ENCODE measurements at regions of chr4 and their contacts with region 1.

Region 1: GRCh38 chr4:139476363-139476762 is 22.4 kb downstream of the RAB33B start:
- DNase-seq: no peak
- H3K4me3 ChIP-seq: no peak overlapping the region
- H3K4me3 Mint-ChIP-seq: no peak overlapping the region
- H3K27ac ChIP-seq: no peak overlapping the region
- H3K27ac Mint-ChIP-seq: peak overlapping the region in 2 of 7 donors; percentile 7 to 24
- H3K4me1 ChIP-seq: no peaks in the 10 kb centered on the region
- H3K4me1 Mint-ChIP-seq: peaks cover 0 to 6% (median 2%) of the 10 kb centered on the region in 4 donors
- H3K27me3 ChIP-seq: no peaks in the 10 kb centered on the region
- H3K27me3 Mint-ChIP-seq: no peaks in the 10 kb centered on the region

Region 2: DNA sequence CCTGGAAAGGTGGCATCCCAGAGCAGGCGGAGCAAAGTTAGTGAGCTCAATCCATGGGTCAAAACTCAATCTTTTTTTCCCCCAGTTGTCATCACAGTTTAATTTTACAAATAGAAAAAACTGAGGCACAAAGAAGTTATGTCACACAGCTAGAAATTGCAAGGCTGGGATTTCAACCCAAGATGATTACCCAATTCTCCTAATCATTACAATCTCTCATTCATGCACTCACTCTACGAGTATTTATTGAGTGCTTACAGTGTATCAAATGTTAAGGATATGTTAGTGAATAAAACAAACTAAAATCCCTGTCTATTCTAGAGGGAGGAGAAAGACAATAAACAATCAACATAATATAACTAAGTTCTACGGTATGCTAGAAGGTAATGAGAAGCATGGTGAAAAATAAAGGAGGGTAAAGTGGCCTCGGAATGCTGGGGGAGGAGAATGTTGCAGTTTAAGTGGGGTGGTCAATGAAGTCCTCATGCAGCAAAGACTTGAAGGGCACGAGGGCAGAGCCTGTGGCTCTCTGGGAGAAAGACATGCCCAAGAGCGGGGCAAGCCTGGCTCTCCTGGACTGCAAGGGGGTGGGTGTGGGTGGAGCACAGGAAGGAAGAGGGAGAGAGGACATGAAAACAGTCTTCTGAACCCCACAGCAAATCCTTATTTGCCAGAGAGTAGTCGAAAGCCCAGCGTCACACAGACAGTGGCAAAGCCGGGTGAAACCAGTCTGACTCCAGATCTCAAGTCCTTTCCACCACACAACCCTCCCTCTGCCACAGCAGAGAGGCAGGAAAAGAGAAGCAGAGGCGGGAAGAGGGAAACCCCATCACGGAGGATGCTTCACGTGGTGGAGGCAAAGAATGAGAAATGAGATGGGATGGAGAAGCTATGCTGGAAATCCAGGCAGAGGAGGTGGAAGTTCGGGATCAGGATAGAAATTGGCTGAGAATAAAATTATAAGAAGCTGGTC is 25.9 kb after region 1 on chr4:
- CTCF ChIA-PET with region 1: interaction called, 11 read pairs
- POLR2A ChIA-PET with region 1: no interaction called
- intact Hi-C with region 1: no loop called
- DNase-seq: peak in 1 of 5 donors; percentile 31
- H3K4me3 ChIP-seq: no peak overlapping the region
- H3K4me3 Mint-ChIP-seq: no peak overlapping the region
- H3K27ac ChIP-seq: no peak overlapping the region
- H3K27ac Mint-ChIP-seq: peak overlapping the region in 1 of 7 donors; percentile 43
- H3K4me1 ChIP-seq: no peaks in the 10 kb centered on the region
- H3K4me1 Mint-ChIP-seq: peaks cover 0 to 6% (median under 1%) of the 10 kb centered on the region in 4 donors
- H3K27me3 ChIP-seq: no peaks in the 10 kb centered on the region
- H3K27me3 Mint-ChIP-seq: no peaks in the 10 kb centered on the region